Dorsolateral prefrontal cortex (tissue), 120 donors: ENCODE measurements at regions of chr18 and their contacts with region 1.

Region 1: DNA sequence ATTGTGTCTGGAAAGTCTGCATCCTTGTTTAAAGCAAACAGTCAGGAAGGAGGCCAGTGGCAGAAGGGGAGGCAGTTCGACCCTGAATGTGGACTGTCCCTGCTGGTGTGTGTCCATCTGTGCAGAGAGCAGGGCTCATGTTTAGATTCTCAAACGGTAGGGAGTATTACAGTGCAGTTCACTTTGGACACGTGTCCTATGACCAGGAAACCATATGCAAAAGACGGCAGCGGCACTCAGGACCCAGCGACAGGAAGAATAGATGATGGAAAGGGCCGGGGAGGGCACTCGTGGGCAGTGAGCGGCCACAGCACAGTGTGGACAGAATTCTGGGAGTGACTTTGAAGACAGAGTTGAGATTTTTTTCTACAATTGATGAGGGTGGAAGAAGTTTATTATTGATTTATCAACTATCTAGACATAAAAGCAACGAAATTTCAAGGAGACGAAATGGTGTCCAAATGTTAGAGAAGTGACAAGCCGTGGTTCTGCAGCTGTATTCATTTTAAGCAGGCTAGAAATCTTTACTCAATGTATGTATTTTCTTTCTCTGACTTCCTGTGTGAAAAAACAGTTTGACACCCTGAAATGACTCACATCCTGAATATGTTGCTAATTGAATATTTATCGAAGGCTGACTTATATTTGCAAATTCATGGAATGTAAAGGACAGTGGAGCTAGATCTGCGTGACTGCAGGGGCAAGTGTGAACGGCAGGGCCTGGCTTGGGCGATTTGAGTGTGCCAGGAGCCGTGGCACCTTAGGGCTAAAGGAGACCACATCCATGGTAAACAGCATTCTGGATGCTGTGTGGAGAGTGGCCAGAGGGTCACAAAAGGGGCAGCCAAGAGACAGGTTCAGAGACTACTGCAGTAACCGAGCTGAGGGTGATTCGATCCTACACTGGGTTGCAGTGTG is 214.2 kb downstream of the PTGR3 start:
- DNase-seq: no peak
- H3K4me3 ChIP-seq: no peak overlapping the region
- H3K27ac ChIP-seq: peak overlapping the region in 2 of 59 donors; percentile 1 to 46
- H3K27me3 ChIP-seq: no peaks in the 10 kb centered on the region
- CTCF ChIP-seq: no peak

Region 2: GRCh38 chr18:74281639-74282358 is 713.0 kb before region 1 on chr18:
- intact Hi-C with region 1: loop called in 1 of 2 experiments (anchors 10 kb)
- DNase-seq: no peak
- H3K4me3 ChIP-seq: no peak overlapping the region
- H3K27ac ChIP-seq: peak overlapping the region in 4 of 59 donors; percentile 20 to 81 (median 54)
- H3K27me3 ChIP-seq: no peaks in the 10 kb centered on the region
- CTCF ChIP-seq: no peak

Region 3: GRCh38 chr18:74661691-74662090 is 333.1 kb before region 1 on chr18:
- intact Hi-C with region 1: no loop called
- DNase-seq: no peak
- H3K4me3 ChIP-seq: no peak overlapping the region
- H3K27ac ChIP-seq: no peak overlapping the region
- H3K27me3 ChIP-seq: no peaks in the 10 kb centered on the region
- CTCF ChIP-seq: no peak

Region 4: GRCh38 chr18:75154997-75155396 is 160.2 kb after region 1 on chr18:
- intact Hi-C with region 1: no loop called
- DNase-seq: no peak
- H3K4me3 ChIP-seq: no peak overlapping the region
- H3K27ac ChIP-seq: no peak overlapping the region
- H3K27me3 ChIP-seq: no peaks in the 10 kb centered on the region
- CTCF ChIP-seq: no peak